Right ventricle myocardium inferior (tissue), 1 donor: ENCODE measurements at regions of chr1 and their contacts with region 1.

Region 1: DNA sequence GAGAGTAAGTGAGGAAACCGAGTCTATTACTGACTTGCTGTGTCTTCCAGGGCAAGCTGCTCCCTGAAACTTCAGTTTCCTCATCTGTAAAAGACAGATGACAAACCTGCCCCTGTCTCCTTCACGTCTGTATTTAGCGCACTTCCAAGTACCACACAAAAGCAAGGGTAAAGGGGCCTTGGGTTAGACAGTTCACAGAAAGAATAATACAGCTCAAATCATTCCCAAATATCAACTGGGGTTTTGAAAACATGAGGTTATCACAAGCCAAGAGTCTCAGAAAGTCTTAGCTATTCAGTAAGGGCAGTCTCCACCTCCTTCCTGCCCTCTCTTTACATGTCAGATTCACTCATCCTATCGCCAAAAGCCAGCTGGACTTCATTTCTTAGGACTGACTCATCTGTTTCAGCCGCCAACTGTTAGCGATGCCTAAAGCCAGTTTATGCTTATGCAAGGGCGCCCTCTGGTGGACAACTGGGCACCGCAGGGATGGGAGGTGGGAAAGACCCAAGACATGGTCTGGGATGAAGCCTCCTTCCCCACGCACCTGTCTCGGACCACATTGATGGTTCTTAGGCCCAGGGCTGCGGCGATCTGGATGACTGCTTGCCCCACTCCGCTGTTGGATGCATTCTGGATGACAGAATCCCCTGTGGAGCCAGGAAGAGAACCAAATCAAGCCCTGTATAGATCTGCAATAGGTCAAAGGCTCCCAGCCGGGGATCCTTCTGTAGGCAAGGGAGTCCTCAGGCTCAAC is 21.1 kb upstream of the SRSF4 start:
- DNase-seq: peak; percentile 95
- ATAC-seq: peak; percentile 94

Region 2: GRCh38 chr1:28796352-28797211 is 406.2 kb before region 1 on chr1:
- intact Hi-C with region 1: loop called (anchors 5 kb)
- DNase-seq: no peak
- ATAC-seq: no peak

Region 3: DNA sequence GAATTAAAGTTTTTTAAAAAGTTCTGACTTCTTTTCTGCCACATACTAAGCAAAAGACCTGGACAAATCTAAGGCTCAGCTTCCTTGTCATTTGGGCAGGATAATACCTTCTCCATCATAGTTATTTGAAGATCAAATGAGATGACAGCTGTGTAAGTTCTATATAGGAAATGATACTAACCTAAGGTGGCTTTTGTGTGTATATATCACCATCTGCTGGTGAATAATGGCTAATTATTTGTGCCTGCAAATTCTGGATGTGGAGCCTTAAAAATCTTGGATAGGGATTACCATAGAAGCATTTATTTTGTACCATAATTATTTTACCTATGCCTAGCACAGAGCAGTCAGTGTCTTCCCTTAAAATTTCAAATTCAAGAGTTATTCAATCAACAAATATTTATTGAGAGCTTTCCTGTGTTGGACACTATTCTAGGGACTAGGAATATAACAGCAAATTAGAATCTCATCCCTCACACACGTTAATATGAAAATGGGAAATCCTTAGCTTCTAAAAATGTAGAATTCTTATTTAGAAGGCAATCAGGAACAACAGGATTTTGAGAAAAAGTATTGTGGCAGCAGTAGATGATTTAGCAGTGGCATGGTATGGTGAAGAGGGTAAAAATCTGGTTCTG is 168.8 kb before region 1 on chr1:
- intact Hi-C with region 1: loop called (anchors 5 kb)
- DNase-seq: no peak
- ATAC-seq: no peak

Region 4: DNA sequence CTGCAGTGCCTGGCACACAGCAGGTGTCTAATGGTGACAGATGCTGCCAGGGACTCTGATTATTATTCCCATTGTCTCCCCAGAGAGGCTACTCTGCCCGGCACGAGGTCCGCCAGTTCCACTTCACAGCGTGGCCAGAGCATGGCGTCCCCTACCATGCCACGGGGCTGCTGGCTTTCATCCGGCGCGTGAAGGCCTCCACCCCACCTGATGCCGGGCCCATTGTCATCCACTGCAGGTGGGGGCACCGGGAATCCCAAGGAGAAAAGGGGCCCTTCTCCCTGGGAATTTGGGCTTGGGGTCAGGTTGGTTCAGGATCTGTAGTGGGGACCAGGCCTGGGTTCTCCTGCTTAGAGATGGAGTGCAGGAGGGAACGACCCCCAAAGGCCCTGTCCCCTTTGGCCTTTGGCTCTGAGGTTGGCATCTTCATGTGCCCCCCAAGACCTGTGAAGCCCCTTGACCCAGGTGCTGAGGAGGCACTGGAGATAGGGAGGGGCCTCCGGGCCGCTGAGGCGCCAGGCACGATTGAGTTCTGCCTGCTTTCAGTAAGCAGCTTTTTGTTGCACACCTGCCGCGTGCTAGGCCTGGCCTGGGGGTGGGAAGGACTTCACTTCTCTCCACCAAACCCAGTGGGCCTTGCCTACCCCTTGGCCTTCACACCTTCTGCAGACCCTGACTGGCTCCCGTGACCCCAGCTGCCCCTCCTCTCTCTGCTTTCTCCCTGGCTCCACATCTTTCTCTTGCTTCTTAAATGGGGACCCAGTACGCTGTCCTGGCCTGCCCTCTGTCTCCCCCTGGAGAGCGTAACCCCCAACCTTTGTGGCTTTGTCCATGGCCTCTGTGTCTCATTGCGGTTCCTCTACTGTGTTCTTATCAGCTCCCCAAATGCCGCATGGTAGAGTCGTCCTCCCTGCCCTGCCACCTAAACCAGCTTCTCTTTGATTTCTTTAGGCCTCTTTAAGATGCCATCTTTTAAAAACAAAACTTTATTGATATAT is 110.0 kb after region 1 on chr1:
- intact Hi-C with region 1: no loop called
- DNase-seq: no peak
- ATAC-seq: no peak